Common myeloid progenitor, CD34-positive (primary cell): ENCODE measurements at regions of chr6 and their contacts with region 1.

Region 1: DNA sequence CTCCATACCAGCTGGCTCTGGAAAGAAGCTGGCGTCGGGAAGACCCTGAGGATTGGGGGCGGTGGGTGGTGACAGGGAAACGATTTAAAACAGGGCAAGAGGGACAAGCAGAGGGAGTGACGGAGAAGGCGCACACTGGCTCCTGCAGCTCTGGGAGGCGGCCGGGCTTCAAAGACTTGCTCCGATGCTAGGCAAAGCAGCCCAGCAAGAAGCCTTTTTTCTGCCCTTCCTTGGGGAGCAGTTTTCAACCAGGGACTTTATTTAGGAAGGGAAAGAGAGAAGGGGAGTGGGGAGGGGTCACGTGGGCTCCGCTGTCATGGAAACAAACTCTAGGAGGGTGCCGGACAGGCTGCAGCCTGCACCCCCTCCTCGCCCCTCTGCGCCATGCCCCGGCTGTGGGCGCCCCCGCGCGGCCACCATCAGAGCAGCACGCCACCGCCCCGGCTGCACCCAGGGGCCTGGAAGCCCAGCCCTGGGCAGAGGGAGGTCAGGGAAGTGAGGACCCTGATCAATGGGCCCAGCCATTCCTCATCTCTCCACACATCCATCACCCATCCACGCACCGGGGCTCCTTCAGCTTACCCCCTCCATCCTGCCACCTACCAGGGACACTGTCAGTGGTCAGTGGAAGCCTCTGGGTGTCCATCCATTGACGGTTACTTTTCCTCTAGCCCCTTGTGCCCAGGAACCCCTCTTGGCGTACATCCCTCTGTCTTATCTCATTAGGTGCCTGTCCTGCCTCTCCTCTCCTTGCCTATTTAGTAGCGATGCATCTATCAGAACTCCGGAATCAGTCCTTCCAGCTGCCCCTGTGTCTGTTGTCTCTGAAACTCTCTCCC is 66.6 kb upstream of the CCDC167 start:
- DNase-seq: peak; percentile 40 to 61 (median 54)
- H3K4me3 ChIP-seq: peak overlapping the region in 6 of 7 experiments; percentile 19 to 66 (median 34)
- H3K27ac ChIP-seq: no peak overlapping the region
- H3K4me1 ChIP-seq: peaks cover 0 to 17% (median 13%) of the 10 kb centered on the region in 4 experiments
- H3K27me3 ChIP-seq: peaks cover 0 to 33% (median 14%) of the 10 kb centered on the region in 5 experiments

Region 2: DNA sequence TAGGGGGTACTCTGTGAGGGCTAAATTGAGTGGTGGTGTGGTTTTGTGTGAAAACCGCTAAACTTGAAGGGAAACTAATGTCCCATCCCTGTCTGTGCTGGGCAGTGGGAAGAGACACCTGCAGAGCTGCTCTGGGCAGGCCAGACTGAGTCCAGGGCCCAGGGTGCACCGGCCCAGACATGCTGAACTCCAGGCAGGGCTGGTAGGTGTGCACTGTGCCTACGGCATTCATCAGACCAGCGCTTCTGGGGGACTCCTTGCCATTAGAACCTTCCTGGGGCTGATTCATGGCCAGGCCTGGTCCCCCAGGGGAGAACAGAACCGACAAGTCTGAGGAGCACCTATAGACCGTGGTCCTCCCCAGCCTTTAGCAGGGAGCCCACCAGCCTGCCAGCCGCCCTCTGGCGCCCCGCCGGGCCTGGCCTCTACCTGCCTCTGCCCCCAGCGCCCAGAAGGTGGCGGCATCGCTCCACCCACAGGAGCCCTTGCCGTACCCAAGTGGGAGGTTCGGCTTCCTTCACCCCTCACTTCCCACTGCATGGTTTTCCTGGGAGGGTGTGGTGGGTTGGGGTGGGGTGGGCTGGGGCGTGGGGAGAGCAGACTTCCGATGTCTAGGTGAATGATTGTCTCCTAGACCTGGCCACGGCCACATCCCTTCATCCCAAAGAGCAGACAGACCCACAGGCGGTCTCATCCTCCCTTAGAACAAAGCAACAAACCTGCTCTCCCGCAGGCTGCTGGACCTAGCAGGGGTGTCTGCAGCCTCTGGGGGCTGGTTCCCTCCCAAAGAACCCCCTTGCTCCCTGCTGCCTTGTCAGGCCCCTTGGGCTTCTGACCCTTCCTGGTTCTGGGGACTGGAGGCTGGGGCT is 82.2 kb before region 1 on chr6:
- CTCF ChIA-PET with region 1: interaction called, 55 read pairs
- POLR2A ChIA-PET with region 1: no interaction called
- DNase-seq: peak in 2 of 3 donors; percentile 60 to 72
- H3K4me3 ChIP-seq: no peak overlapping the region
- H3K27ac ChIP-seq: no peak overlapping the region
- H3K4me1 ChIP-seq: peaks cover 0 to 3% (median under 1%) of the 10 kb centered on the region in 4 experiments
- H3K27me3 ChIP-seq: no peaks in the 10 kb centered on the region

Region 3: GRCh38 chr6:37489660-37490361 is 76.5 kb before region 1 on chr6:
- CTCF ChIA-PET with region 1: interaction called, 55 read pairs
- POLR2A ChIA-PET with region 1: interaction called, 6 read pairs
- DNase-seq: peak in 2 of 3 donors; percentile 23 to 30
- H3K4me3 ChIP-seq: no peak overlapping the region
- H3K27ac ChIP-seq: no peak overlapping the region
- H3K4me1 ChIP-seq: peaks cover 0 to 8% (median 5%) of the 10 kb centered on the region in 4 experiments
- H3K27me3 ChIP-seq: peaks cover 0 to 3% (median 0%) of the 10 kb centered on the region in 5 experiments

Region 4: DNA sequence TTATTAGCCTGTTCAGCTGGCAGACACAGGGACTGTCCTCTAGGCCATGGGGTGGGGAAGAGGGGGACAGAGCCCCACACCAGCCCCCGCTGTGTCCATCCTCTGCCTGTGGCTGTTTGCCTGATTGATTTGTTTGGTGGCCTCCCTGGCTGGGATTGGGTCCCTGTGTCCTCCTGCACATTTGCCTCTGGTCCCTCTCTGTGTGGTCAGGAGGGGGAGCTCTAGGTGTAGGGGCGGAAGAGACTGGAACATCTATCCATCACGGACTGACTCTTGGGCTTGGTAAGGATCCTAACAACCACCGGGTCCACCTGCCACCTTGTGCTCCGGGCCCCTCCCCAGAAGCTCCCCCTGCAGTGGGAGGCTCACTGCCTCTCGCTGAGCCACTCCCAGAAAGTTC is 28.2 kb before region 1 on chr6:
- CTCF ChIA-PET with region 1: interaction called, 25 read pairs
- POLR2A ChIA-PET with region 1: no interaction called
- DNase-seq: no peak
- H3K4me3 ChIP-seq: no peak overlapping the region
- H3K27ac ChIP-seq: no peak overlapping the region
- H3K4me1 ChIP-seq: peaks cover 0 to 29% (median 17%) of the 10 kb centered on the region in 4 experiments
- H3K27me3 ChIP-seq: peaks cover 2 to 57% (median 34%) of the 10 kb centered on the region in 5 experiments

Region 5: DNA sequence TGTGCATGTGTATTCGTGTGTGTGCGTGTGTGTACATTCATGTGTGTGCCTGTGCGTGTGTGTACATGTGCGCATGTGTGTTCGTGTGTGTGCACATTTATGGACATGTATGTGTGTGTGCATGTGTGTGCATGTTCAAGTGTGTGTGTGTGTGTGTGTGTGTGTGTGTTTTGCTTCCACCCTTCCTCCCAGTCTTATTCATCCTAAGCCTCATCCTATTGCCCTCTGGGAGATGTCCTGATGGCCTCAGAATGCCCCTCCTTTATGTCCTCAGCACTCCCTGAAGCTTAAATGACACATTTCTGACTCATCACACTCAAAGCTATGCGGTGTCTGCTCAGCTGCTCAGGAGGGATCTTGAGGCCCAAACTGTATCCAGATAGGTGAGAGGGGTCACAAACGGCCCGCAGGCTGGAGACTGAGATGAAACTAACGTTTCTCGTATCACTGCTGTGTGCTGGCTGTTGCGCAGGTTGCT is 10.0 kb after region 1 on chr6:
- CTCF ChIA-PET with region 1: interaction called, 25 read pairs
- POLR2A ChIA-PET with region 1: no interaction called
- DNase-seq: no peak
- H3K4me3 ChIP-seq: no peak overlapping the region
- H3K27ac ChIP-seq: no peak overlapping the region
- H3K4me1 ChIP-seq: no peaks in the 10 kb centered on the region
- H3K27me3 ChIP-seq: no peaks in the 10 kb centered on the region